Activated T-helper 1 cell treated with anti-CD3 and anti-CD28 coated beads, Interleukin-12 subunit alpha, Interleukin-12 subunit beta, Interleukin-2, Interleukin-4 antibody, amounts not matched to agents 30 ng/mL and 10 ng/mL and 1 ng/mL, durations not matched to agents 14 hours and 24 hours and 36 hours (primary cell): ENCODE measurements at regions of chr5 and their contacts with region 1.

Region 1: GRCh38 chr5:141691867-141692532 is 10.0 kb upstream of the ARAP3 start:
- DNase-seq: peak; percentile 83
- H3K4me3 Mint-ChIP-seq: peak overlapping the region; percentile 75
- H3K27ac Mint-ChIP-seq: peak overlapping the region; percentile 69
- H3K4me1 Mint-ChIP-seq: peaks cover 34% of the 10 kb centered on the region
- H3K27me3 Mint-ChIP-seq: peaks cover 12% of the 10 kb centered on the region

Region 2: DNA sequence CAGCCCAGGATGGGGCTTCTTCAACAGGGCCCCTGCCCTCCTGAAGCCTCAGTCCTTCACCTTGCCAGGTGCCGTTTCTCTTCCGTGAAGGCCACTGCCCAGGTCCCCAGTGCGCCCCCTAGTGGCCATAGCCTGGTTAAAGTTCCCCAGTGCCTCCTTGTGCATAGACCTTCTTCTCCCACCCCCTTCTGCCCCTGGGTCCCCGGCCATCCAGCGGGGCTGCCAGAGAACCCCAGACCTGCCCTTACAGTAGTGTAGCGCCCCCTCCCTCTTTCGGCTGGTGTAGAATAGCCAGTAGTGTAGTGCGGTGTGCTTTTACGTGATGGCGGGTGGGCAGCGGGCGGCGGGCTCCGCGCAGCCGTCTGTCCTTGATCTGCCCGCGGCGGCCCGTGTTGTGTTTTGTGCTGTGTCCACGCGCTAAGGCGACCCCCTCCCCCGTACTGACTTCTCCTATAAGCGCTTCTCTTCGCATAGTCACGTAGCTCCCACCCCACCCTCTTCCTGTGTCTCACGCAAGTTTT is 179.6 kb before region 1 on chr5:
- intact Hi-C with region 1: no loop called
- DNase-seq: peak; percentile 74
- H3K4me3 Mint-ChIP-seq: peak overlapping the region; percentile 87
- H3K27ac Mint-ChIP-seq: peak overlapping the region; percentile 95
- H3K4me1 Mint-ChIP-seq: peaks cover 37% of the 10 kb centered on the region
- H3K27me3 Mint-ChIP-seq: no peaks in the 10 kb centered on the region

Region 3: GRCh38 chr5:141567513-141568117 is 124.4 kb before region 1 on chr5:
- intact Hi-C with region 1: no loop called
- DNase-seq: no peak
- H3K4me3 Mint-ChIP-seq: no peak overlapping the region
- H3K27ac Mint-ChIP-seq: no peak overlapping the region
- H3K4me1 Mint-ChIP-seq: peaks cover 25% of the 10 kb centered on the region
- H3K27me3 Mint-ChIP-seq: no peaks in the 10 kb centered on the region

Region 4: DNA sequence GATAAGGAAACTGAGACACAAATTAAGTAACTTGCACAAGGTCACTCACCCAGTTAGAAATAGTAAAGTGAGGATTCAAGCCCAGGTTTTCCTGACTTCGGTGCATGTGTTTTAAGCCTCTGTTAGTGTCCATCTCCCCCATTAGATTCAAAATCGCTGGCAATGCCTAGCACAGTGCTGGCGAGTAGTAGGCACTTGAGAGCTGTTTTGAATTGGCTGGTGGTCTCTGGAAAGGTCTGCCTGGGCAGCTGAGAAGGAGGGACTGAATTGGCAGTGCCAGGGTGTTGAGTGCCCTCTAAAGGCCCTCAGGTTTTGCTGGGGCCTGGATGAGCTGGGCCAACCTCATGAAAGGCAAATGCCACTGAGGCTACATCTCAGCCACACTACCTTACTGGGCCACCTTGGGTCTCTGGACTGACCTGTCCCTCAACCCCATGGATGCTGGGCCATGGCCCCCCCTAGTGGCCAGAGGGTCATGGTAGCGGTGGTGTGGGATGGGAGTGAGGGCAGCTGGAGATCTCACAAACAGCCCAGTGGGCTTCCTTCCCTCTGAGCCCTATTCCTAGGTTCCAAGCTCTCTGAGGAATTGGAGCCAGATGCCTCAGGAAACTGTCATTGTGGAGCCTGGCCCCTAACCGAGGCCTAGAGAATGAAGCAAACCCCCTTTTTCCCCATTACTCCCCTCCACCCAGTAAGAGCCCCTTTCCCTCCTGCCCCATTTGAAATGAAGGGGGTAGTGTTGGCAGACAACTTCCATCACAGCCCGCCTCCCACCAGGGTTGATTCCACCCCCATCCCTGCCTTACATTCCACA is 122.0 kb after region 1 on chr5:
- intact Hi-C with region 1: loop called (anchors 1 kb)
- DNase-seq: peak; percentile 11
- H3K4me3 Mint-ChIP-seq: no peak overlapping the region
- H3K27ac Mint-ChIP-seq: no peak overlapping the region
- H3K4me1 Mint-ChIP-seq: no peaks in the 10 kb centered on the region
- H3K27me3 Mint-ChIP-seq: peaks cover 38% of the 10 kb centered on the region

Region 5: GRCh38 chr5:141923448-141924352 is 231.7 kb after region 1 on chr5 and contains the start of gene DELE1:
- intact Hi-C with region 1: loop called (anchors 1 kb)
- DNase-seq: peak; percentile 88
- H3K4me3 Mint-ChIP-seq: peak within 1 kb of the TSS; percentile 92
- H3K27ac Mint-ChIP-seq: peak within 1 kb of the TSS; percentile 96
- H3K4me1 Mint-ChIP-seq: peaks cover 32% of the 10 kb centered on the region
- H3K27me3 Mint-ChIP-seq: no peaks in the 10 kb centered on the region
- total RNA-seq, gene DELE1: 68.4 and 81.5 TPM in 2 replicates

Region 6: DNA sequence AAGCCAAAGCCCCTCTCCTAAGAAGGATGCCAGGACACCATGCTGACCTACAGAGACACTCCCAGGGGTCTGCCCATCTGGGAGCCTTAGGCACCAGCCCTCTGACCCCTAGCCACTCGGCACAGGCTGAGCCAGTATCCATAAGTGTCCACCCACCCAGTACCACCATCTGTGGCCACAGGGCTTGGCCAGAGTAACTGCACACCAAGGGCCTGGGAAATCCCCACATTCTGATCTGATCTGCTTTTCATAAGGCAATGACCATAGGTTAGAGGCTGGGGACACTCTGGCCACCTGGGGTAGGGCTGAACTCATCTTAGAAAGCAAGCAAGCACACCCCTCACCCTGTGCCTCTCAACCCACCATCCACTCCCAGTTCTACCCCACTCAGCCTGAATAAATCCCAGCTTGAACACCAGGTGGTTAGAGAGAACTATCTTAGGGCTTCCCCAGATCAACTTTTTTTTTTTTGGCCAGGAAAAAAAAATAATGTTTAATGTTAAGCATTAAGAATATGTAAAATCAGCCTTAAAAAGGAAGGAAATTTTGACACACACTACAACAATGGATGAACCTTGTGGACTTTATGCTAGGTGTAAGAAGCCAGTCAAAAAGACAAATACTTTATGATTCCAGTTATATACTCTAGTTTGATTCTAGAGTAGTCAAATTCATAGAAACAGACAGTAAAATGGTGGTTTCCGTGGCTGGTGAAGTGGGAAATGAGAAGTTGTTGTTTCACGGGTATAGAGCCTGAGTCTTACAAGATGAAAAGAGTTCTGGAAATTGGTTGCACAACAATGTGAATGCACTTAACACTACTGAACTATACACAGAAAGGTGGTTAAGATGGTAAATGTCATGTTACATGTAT is 314.6 kb after region 1 on chr5:
- intact Hi-C with region 1: loop called (anchors 2 kb)
- DNase-seq: peak; percentile 58
- H3K4me3 Mint-ChIP-seq: peak overlapping the region; percentile 80
- H3K27ac Mint-ChIP-seq: peak overlapping the region; percentile 94
- H3K4me1 Mint-ChIP-seq: peaks cover 72% of the 10 kb centered on the region
- H3K27me3 Mint-ChIP-seq: no peaks in the 10 kb centered on the region

Region 7: GRCh38 chr5:142145106-142145900 is 453.3 kb after region 1 on chr5:
- intact Hi-C with region 1: loop called (anchors 2 kb)
- DNase-seq: peak; percentile 26
- H3K4me3 Mint-ChIP-seq: no peak overlapping the region
- H3K27ac Mint-ChIP-seq: no peak overlapping the region
- H3K4me1 Mint-ChIP-seq: peaks cover 6% of the 10 kb centered on the region
- H3K27me3 Mint-ChIP-seq: no peaks in the 10 kb centered on the region

Region 8: DNA sequence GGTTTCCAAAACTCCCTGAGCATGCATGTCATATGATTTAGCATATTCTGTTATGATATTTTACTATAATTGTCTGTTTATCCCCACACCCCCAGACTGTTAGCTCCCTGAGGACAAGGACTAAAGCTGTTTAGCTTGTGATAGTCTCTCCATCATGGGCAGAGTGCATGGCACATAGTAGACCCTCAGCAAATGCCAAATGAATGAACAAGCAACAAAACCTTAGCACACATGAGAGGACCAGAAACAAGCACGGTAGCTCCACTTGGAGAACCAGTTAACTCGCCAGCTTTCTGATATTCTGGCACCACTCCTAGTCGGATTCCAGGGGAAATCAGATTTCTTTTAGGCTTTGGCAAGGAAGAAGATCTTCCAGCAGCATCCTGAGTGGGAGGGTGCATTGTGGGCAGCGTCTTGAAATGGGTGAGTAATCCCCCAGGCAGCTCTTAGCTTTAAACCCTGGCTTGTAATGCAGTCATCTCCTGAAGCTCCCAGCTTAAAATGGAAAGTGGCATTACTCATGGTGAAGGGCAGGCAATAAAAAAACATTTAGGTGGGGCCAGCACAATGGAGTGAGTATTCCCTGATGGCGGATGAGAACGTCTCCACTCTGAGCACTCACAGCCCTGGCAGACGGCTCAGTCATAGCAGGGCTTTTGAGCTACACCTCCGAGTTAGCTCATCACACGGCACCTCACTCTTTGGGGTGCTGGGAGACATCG is 952.8 kb after region 1 on chr5:
- intact Hi-C with region 1: no loop called
- DNase-seq: no peak
- H3K4me3 Mint-ChIP-seq: no peak overlapping the region
- H3K27ac Mint-ChIP-seq: no peak overlapping the region
- H3K4me1 Mint-ChIP-seq: no peaks in the 10 kb centered on the region
- H3K27me3 Mint-ChIP-seq: peaks cover 21% of the 10 kb centered on the region